ENCODE measurements at regions of chr15 and their contacts with region 1.

Region 1: GRCh38 chr15:39580117-39580484 is 778 bp upstream of the THBS1 start:
- DNase-seq: peak; percentile 95
- ATAC-seq: peak; percentile 92

Region 2: DNA sequence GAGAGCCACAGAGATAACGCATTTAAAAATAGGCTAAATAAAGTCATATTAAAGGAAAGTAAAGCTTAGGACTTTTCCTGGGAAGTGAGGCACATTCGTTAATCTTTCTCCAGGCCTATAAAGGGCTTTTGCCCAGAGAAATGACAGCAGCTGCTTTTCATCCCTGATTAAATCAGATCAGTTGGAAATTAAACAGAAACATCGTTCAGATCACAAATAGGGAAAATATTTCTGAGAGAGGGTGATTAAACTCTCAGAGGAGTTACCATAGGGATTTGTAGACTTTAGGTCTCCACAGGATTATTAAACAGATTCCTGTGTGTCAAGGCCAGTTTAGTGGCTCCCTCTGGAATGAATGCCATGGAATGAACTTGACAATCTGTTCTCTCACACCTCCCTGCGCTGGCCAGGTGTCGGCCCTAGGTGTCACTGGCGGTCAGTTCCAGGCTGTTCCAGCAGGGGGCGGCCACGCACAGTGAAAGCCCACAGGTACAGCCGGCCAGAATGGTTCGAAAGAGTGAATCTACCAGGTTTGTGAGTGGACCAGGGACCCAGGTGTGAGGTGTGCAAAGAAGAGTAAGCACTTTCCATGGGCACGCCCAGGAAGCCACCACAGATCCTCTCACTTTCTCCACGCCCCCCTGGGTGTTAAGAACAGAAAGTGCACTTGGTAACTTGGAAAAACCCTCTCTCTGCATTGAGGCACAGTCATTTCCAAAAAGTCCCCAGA is 762.5 kb before region 1 on chr15:
- intact Hi-C with region 1: loop called (anchors 5 kb)
- DNase-seq: peak; percentile 91
- ATAC-seq: peak; percentile 94

Region 3: DNA sequence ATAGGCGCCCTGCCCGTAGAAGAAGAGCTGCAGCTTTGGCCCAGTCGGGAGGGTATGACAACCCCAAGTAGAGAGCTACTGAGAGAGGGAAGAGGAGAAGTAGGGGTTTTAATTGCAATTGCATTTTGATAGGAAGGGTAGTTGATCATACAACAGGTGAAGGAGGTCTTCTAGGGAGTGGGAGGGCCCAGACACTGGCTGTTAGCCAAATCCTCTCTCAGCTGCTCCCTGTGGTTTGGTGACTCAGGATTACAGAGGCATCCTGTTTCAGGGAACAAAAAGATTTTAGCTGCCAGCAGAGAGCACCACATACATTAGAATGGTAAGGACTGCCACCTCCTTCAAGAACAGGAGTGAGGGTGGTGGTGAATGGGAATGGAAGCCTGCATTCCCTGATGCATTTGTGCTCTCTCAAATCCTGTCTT is 408.1 kb before region 1 on chr15:
- intact Hi-C with region 1: loop called (anchors 1 kb)
- DNase-seq: no peak
- ATAC-seq: peak; percentile 83

Region 4: DNA sequence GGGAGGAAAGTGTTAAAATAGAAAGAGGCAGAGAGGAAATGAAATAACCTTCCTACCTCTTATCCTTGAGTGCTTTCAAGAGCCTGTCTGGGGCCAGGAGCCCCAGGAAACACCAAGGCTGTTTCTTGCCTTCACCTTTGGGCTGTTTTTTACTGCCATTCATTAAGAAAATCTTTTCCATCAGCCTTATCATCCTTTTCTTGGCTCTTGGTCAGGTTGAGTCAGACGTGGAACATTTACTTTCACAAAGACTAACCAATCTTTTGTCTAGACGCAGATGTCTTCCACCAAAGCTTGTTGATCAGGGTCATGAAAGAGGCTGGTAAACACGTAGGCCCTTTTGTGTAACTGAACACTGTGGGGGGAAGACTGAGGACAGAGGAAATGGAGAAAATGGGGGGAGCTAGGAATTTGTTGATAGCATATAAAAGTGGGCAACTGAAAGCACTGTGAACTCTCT is 150.2 kb before region 1 on chr15:
- intact Hi-C with region 1: loop called (anchors 5 kb)
- DNase-seq: no peak
- ATAC-seq: no peak

Region 5: DNA sequence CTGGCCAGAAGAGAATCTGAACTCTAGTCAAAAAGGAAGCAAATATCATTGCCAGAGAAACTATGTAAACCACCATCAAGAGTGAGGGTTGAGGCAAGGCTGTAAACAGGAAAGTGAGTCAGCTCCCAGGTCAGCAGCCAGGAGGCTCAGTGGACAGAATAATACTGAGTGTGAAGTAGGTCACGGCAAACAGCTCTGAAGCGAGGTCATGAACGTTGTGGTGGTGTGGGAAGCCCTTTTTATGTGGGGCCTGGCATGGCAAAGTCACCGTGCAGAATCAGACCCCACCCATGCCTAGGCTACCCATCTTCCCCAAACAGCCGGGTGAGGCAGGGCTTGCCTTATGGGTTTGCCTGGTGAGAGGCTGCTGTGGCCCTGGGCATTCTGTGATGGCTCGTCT is 44.7 kb after region 1 on chr15:
- intact Hi-C with region 1: no loop called
- DNase-seq: peak; percentile 68
- ATAC-seq: peak; percentile 61

Region 6: DNA sequence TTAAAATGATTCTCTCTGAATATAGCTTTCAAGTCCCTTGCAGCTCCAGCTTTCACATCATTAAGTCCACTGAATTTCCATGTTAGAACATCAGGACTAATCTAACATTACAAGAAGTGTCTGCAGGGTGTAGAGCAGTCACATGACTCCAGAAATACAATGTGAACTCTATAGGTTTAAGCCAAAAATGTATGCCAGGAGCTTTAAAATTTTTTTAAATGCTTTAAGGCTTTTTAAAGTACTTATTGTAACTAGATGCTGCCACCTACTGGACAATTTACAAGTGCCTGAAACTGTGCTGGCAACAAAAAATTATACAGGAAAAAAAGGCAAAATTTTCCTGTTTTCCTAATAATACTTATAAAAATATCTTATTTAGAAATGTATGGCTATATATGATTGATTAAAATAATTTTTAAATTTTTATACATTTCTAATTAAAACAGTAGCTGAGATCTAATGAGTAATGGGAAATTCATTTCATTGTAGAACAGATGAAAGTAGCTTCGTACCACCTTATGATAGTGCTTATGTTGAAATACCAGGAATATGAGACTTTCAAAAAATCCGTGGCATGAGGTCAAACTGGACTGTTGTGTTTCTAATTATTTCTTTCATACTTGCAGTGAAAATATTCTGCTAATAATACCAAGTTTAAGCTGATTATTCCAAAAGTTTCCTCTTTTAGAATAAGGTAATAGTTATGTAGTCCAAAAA is 176.9 kb after region 1 on chr15:
- intact Hi-C with region 1: loop called (anchors 5 kb)
- DNase-seq: no peak
- ATAC-seq: no peak